Naive thymus-derived CD4-positive, alpha-beta T cell (primary cell): ENCODE measurements at regions of chr5 and their contacts with region 1.

Region 1: GRCh38 chr5:95554647-95555548 is at the starts of genes ARSK and SKIC3:
- DNase-seq: peak; percentile 76 to 98 (median 97)
- ATAC-seq: peak; percentile 93
- H3K4me3 ChIP-seq: peak within 1 kb of the TSS; percentile 71
- H3K4me3 Mint-ChIP-seq: peak within 1 kb of the TSS; percentile 90 to 100 (median 96)
- H3K27ac ChIP-seq: peak within 1 kb of the TSS; percentile 83
- H3K27ac Mint-ChIP-seq: peak within 1 kb of the TSS; percentile 92 to 98 (median 94)
- H3K4me1 ChIP-seq: peaks cover 20 to 27% of the 10 kb centered on the region in 2 donors
- H3K4me1 Mint-ChIP-seq: peaks cover 26 to 66% (median 47%) of the 10 kb centered on the region in 7 donors
- H3K27me3 ChIP-seq: no peaks in the 10 kb centered on the region
- H3K27me3 Mint-ChIP-seq: peaks cover 0 to 2% (median 0%) of the 10 kb centered on the region in 5 donors
- total RNA-seq, gene ARSK: 2.5 to 8.5 (median 4.5) TPM
- total RNA-seq, gene SKIC3: 74.6 to 103 (median 81.0) TPM

Region 2: DNA sequence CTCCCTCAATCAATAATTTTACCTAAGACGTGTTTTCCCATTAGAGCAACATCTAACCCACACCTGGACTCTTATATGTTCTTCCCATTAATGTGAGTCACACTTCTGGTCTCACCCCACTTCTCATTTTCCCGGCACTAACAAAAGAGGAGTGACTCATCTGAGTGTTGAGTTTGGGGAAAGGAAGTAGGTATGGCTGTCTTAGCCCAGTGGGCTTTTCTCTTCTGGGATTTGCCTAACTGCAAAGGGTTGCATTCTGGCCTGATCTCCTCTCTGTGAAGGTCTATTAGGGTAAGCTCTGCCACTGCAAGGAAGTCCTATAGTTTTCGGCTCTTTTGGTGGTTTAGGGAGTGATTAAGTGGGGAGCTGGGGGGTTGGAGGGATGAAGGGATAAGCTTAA is 1132.1 kb before region 1 on chr5:
- CTCF ChIA-PET with region 1: no interaction called
- POLR2A ChIA-PET with region 1: no interaction called
- intact Hi-C with region 1: no loop called
- DNase-seq: no peak
- ATAC-seq: peak; percentile 40
- H3K4me3 ChIP-seq: no peak overlapping the region
- H3K4me3 Mint-ChIP-seq: no peak overlapping the region
- H3K27ac ChIP-seq: no peak overlapping the region
- H3K27ac Mint-ChIP-seq: no peak overlapping the region
- H3K4me1 ChIP-seq: no peaks in the 10 kb centered on the region
- H3K4me1 Mint-ChIP-seq: peaks cover 0 to 5% (median 0%) of the 10 kb centered on the region in 7 donors
- H3K27me3 ChIP-seq: no peaks in the 10 kb centered on the region
- H3K27me3 Mint-ChIP-seq: no peaks in the 10 kb centered on the region

Region 3: DNA sequence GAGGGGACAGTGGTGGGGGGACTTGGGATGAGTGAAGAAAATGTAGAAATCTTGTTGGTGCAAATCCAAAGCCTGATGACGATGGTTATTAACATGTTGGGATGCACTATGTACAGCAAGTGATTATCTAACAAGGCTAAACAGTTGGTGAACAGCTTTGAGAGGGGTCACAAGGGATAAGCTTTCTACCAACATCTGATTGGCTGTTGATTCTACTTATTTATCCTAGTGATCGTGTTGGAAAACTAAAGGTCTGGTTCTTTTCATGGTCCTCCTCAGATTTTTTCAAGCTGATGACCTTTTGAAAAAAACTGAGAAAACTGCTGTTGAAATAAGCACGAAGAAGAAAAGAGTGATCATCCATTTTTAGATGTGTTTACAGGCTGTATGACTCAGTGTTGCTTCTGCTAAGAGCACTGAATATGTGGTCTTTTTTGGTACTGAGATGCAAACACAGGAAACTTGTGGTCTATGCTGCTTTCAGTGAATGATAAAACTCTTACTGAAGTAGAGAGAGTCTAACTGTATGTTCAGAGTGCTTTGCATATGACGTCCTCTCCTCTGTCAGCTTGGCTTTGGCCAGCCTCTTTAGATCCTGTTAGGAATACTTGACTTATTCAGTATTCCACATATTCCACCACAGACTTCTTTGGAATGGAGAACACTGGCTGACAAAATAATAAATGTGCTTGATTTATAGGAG is 761.6 kb before region 1 on chr5:
- CTCF ChIA-PET with region 1: no interaction called
- POLR2A ChIA-PET with region 1: no interaction called
- intact Hi-C with region 1: loop called in 1 of 2 experiments (anchors 10 kb)
- DNase-seq: peak in 6 of 9 donors; percentile 14 to 53 (median 30)
- ATAC-seq: peak; percentile 95
- H3K4me3 ChIP-seq: no peak overlapping the region
- H3K4me3 Mint-ChIP-seq: peak overlapping the region in 8 of 10 donors; percentile 17 to 74 (median 37)
- H3K27ac ChIP-seq: peak overlapping the region; percentile 24
- H3K27ac Mint-ChIP-seq: peak overlapping the region; percentile 22 to 97 (median 80)
- H3K4me1 ChIP-seq: peaks cover 16 to 29% of the 10 kb centered on the region in 2 donors
- H3K4me1 Mint-ChIP-seq: peaks cover 13 to 49% (median 35%) of the 10 kb centered on the region in 7 donors
- H3K27me3 ChIP-seq: no peaks in the 10 kb centered on the region
- H3K27me3 Mint-ChIP-seq: peaks cover 0 to 10% (median 0%) of the 10 kb centered on the region in 5 donors

Region 4: DNA sequence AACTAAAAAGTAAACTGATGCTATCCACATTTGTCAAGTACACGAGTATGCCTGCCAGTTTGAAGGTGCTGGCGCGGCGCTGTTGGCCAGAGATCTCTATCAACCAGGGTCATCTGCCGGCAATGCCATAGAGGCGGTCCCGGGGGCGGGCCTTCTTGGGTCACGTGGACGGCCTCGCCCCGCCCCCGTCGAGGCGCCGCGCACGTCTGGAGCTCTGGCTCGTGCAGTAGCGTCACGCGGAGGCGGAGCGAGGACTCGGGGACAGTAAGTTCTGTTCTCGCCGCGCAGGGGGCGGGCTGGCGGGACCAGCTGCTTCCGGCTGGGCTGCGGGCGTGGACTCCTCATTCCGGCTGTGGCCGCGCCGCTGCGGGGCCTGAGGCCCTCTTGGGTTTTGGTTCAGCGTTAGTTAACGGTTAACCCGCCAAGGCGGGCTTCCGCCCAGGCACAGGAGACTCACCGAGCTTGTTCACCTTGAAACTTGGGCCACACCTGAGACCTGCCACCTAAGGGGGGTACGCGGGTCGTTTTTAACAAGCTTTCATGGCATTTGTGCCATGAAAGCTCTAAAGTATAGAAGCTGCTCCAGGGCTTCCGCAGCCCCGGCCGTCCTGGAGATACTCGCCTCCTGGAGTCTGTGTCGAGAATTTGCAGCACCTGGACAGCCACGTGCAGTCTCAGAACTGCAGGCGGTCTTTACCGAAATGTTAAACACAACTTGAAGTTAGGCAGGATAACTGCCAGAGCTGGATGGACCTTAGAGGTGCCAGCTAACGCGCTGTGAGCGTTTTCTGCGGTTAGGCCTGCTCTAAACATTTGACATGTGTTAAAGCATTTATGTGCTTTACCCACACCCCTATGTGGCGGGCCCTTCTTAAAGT is 91.9 kb after region 1 on chr5 and contains the start of gene RFESD:
- CTCF ChIA-PET with region 1: interaction called, 6 read pairs
- POLR2A ChIA-PET with region 1: interaction called, 14 read pairs
- intact Hi-C with region 1: loop called (anchors 1 kb)
- DNase-seq: peak; percentile 84 to 94 (median 90)
- ATAC-seq: peak; percentile 98
- H3K4me3 ChIP-seq: peak within 1 kb of the TSS; percentile 80
- H3K4me3 Mint-ChIP-seq: peak within 1 kb of the TSS; percentile 84 to 93 (median 88)
- H3K27ac ChIP-seq: peak within 1 kb of the TSS; percentile 80
- H3K27ac Mint-ChIP-seq: peak within 1 kb of the TSS; percentile 71 to 95 (median 89)
- H3K4me1 ChIP-seq: peaks cover 0 to 18% of the 10 kb centered on the region in 2 donors
- H3K4me1 Mint-ChIP-seq: peaks cover 7 to 53% (median 40%) of the 10 kb centered on the region in 7 donors
- H3K27me3 ChIP-seq: no peaks in the 10 kb centered on the region
- H3K27me3 Mint-ChIP-seq: no peaks in the 10 kb centered on the region
- total RNA-seq, gene RFESD: 2.2 to 9.2 (median 6.5) TPM

Region 5: DNA sequence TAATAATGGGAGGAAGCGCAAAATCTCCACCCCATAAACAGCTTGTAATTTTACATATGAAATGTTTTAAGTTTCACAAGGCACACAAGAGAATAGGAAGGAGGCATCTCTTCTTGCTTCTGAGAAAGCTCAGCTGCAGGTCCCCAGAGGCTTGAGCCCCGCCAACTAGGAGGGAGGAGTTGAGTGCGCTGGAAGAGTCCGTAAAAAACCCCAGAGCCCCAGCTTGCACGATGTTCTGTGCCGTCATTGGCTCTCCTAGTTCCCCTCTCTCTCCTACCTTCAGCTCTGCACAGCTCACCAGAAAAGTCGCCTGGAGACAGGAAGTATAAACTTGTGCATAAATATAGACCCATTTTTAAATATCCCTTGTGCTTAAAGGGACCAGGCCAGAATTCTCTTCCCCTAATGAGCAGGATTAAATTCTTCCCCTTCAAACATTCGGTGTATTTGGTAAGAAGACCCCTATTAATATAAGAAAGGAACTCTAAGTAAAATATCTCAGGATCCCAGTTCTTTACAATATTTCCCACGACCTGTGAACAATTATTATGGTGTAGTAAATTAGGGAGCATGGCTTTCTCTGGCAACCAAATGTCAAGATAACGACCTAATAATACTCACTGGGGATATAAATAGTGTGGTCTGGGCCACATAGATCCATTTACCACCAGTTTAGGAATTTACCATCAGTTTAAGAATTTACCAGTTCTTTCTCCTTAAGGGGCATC is 254.0 kb after region 1 on chr5:
- CTCF ChIA-PET with region 1: no interaction called
- POLR2A ChIA-PET with region 1: interaction called, 3 read pairs
- intact Hi-C with region 1: loop called (anchors 1 to 2 kb)
- DNase-seq: peak; percentile 54 to 92 (median 88)
- ATAC-seq: peak; percentile 100
- H3K4me3 ChIP-seq: peak overlapping the region; percentile 24
- H3K4me3 Mint-ChIP-seq: peak overlapping the region; percentile 21 to 84 (median 76)
- H3K27ac ChIP-seq: peak overlapping the region; percentile 75
- H3K27ac Mint-ChIP-seq: peak overlapping the region; percentile 76 to 98 (median 90)
- H3K4me1 ChIP-seq: peaks cover 31 to 49% of the 10 kb centered on the region in 2 donors
- H3K4me1 Mint-ChIP-seq: peaks cover 53 to 71% (median 64%) of the 10 kb centered on the region in 7 donors
- H3K27me3 ChIP-seq: no peaks in the 10 kb centered on the region
- H3K27me3 Mint-ChIP-seq: no peaks in the 10 kb centered on the region

Region 6: DNA sequence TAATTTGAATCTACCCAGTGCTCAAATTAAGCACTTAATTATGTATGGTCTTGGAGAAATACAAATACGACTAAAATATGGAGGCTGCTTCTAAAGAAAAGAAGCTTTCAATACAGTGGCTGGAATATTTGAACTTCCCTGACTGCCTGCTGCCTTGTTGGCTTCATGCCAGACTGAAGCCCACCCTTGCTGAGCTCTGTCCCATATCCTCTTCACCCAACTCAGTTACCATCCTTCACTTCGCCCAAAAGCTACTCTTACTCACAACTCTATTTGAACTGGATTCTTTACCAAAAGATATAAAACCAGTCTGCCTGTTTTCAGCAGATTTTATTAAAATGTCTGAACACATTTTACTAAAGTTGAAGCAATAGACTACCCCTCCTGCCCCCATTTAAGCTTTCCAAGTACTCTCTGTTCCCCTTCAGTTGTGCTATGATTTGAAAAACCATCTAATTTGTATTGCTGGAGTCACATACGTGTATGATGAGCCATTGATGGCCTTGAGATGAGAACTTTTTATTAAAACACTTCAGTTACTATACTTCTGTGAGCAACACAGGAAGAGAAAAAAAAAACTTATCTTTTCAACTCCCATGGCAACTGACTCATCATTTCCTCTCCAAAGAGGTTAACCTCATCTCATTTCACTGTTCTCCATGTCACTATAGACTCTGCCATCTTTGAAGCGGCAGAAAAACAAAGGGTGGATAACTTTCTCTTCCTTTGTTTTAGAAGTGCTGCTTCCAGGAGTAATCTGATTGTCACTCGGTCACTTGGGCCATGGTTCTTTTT is 982.3 kb after region 1 on chr5:
- CTCF ChIA-PET with region 1: no interaction called
- POLR2A ChIA-PET with region 1: no interaction called
- intact Hi-C with region 1: loop called (anchors 2 to 5 kb)
- DNase-seq: peak in 7 of 9 donors; percentile 54 to 79 (median 73)
- ATAC-seq: peak; percentile 97
- H3K4me3 ChIP-seq: peak overlapping the region; percentile 14
- H3K4me3 Mint-ChIP-seq: peak overlapping the region in 9 of 10 donors; percentile 26 to 76 (median 61)
- H3K27ac ChIP-seq: peak overlapping the region; percentile 41
- H3K27ac Mint-ChIP-seq: peak overlapping the region; percentile 82 to 94 (median 88)
- H3K4me1 ChIP-seq: peaks cover 20 to 23% of the 10 kb centered on the region in 2 donors
- H3K4me1 Mint-ChIP-seq: peaks cover 15 to 41% (median 32%) of the 10 kb centered on the region in 7 donors
- H3K27me3 ChIP-seq: no peaks in the 10 kb centered on the region
- H3K27me3 Mint-ChIP-seq: peaks cover 0 to 6% (median 0%) of the 10 kb centered on the region in 5 donors

Region 7: DNA sequence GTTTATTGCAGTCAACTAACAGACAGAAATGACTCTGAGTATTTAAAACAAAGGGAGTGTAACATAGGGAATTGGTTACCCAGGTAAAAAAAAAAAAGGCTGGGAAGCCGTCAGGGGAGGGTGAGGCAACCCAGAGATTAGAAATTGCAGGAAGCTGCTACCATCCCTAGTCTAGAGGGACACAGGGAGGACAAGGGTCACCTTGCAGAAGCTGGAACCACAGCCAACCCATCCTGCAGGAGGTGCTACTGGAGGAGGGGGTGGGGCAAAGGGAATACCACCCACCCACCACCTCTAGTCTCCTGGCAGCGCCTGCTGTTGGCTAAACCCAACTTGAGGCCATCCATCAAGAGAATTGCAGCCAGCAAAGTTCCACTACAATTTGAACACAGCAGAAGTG is 1113.8 kb after region 1 on chr5:
- CTCF ChIA-PET with region 1: no interaction called
- POLR2A ChIA-PET with region 1: no interaction called
- intact Hi-C with region 1: no loop called
- DNase-seq: no peak
- ATAC-seq: no peak
- H3K4me3 ChIP-seq: no peak overlapping the region
- H3K4me3 Mint-ChIP-seq: no peak overlapping the region
- H3K27ac ChIP-seq: no peak overlapping the region
- H3K27ac Mint-ChIP-seq: no peak overlapping the region
- H3K4me1 ChIP-seq: peaks cover 14 to 17% of the 10 kb centered on the region in 2 donors
- H3K4me1 Mint-ChIP-seq: peaks cover 40 to 69% (median 55%) of the 10 kb centered on the region in 7 donors
- H3K27me3 ChIP-seq: no peaks in the 10 kb centered on the region
- H3K27me3 Mint-ChIP-seq: no peaks in the 10 kb centered on the region

Region 8: DNA sequence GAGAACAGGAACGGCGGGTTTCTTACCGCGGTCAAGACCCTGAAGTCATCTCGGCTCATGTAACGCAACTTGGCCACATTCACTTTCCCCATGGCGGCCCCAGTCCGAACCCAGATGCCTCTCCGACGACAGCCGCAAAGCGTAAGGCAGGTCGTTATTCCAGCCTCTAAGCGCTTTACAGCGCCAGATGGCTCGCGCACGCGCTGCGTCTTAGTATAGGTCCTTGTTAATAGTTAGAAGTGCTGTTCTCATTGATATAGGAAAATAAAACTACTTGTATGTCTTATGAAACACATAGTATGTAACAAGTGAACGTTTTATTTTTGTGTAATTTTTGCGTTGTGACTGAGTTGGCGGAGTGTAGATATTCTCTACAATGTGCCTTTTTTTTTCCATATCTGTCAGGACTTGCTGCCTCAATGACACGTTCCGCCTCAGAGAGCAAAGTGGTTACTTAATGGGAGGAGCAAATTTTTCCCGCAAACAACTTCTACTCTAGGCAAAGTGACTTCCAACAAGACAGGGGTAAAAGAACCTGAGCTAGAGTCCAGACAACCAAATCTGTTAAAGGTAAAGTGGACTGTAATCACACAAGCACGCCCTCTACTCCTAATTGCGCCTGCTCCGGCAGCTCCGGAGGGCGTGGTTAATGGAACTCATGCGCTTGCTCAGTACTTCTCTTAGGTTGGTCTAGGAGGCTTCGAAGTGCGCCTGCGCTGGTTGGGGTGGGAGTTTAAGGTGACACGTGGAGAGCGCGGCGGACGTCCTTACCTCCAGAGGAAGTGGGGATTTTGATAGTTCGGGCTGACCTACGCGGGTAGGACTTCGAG is 1628.4 kb after region 1 on chr5 and contains the start of gene RIOK2:
- CTCF ChIA-PET with region 1: no interaction called
- POLR2A ChIA-PET with region 1: no interaction called
- intact Hi-C with region 1: loop called (anchors 1 kb)
- DNase-seq: peak; percentile 77 to 93 (median 91)
- ATAC-seq: peak; percentile 96
- H3K4me3 ChIP-seq: peak within 1 kb of the TSS; percentile 82
- H3K4me3 Mint-ChIP-seq: peak within 1 kb of the TSS; percentile 89 to 98 (median 94)
- H3K27ac ChIP-seq: peak within 1 kb of the TSS; percentile 94
- H3K27ac Mint-ChIP-seq: peak within 1 kb of the TSS; percentile 99 to 100 (median 100)
- H3K4me1 ChIP-seq: peaks cover 4 to 14% of the 10 kb centered on the region in 2 donors
- H3K4me1 Mint-ChIP-seq: peaks cover 23 to 54% (median 44%) of the 10 kb centered on the region in 7 donors
- H3K27me3 ChIP-seq: no peaks in the 10 kb centered on the region
- H3K27me3 Mint-ChIP-seq: peaks cover 0 to 3% (median 0%) of the 10 kb centered on the region in 5 donors
- total RNA-seq, gene RIOK2: 18.8 to 36.0 (median 28.5) TPM